ENCODE measurements at regions of chr5 and their contacts with region 1.

Region 1: DNA sequence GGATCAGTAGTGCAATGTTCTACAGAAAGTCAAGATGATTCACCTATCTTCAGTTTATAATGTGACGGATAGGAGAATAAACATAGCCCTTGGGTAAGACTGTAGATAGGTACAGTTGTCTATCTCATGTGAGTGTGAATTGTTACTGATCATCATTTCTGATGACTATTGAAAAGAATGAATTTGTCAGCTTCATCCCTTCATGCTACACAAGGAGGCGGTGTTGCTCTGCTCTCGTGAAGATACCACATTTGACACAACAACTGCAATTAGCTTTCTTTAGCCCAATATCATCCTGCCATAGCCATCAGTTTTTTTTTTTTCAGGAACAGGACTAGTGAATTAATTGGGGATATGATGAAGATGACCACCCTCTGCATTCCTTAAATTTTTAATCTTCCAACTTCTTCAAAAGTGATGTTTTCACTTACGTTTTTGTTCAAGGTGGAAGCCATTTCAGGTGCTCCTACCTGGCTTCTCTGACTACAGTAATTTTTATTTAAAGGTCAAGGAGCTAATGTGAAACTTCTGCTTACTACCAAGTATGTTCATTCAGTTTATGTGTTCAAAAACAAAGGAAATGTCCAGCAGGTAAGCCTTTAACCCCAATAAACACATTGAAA is 152.9 kb upstream of the MOCS2 start:
- DNase-seq: peak; percentile 65
- H3K4me3 Mint-ChIP-seq: no peak overlapping the region
- H3K27ac Mint-ChIP-seq: no peak overlapping the region
- H3K4me1 Mint-ChIP-seq: peaks cover 21% of the 10 kb centered on the region
- H3K27me3 Mint-ChIP-seq: no peaks in the 10 kb centered on the region
- CTCF ChIP-seq: peak; percentile 61

Region 2: DNA sequence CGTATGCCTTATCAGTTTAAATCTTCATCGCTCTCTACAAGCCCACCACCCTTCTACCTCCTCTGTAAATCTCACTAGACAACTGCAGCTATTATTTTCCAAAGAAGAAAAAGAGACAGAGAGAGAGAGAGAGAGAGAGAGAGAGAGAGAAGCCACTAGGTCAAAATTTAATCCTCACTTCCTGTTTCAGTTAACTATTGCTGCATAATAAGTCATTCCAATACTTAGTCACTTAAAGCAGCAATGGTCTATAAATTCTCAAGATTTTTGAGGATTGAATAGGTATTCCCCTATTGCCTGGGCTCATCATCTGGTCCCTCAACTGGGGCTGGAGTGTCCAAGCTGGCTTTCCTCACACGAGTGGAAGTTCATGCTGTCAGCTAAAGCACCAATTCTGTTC is 405.9 kb before region 1 on chr5:
- CTCF ChIA-PET with region 1: no interaction called
- POLR2A ChIA-PET with region 1: no interaction called
- intact Hi-C with region 1: no loop called
- DNase-seq: no peak
- H3K4me3 Mint-ChIP-seq: no peak overlapping the region
- H3K27ac Mint-ChIP-seq: no peak overlapping the region
- H3K4me1 Mint-ChIP-seq: peaks cover 6% of the 10 kb centered on the region
- H3K27me3 Mint-ChIP-seq: no peaks in the 10 kb centered on the region
- CTCF ChIP-seq: no peak

Region 3: GRCh38 chr5:53069626-53070025 is 192.8 kb before region 1 on chr5:
- CTCF ChIA-PET with region 1: no interaction called
- POLR2A ChIA-PET with region 1: no interaction called
- intact Hi-C with region 1: no loop called
- DNase-seq: peak; percentile 71
- H3K4me3 Mint-ChIP-seq: no peak overlapping the region
- H3K27ac Mint-ChIP-seq: no peak overlapping the region
- H3K4me1 Mint-ChIP-seq: peaks cover 7% of the 10 kb centered on the region
- H3K27me3 Mint-ChIP-seq: no peaks in the 10 kb centered on the region
- CTCF ChIP-seq: no peak

Region 4: GRCh38 chr5:53170748-53171349 is 91.6 kb before region 1 on chr5:
- CTCF ChIA-PET with region 1: interaction called, 5 read pairs
- POLR2A ChIA-PET with region 1: no interaction called
- intact Hi-C with region 1: loop called (anchors 2 kb)
- DNase-seq: peak; percentile 63
- H3K4me3 Mint-ChIP-seq: no peak overlapping the region
- H3K27ac Mint-ChIP-seq: no peak overlapping the region
- H3K4me1 Mint-ChIP-seq: peaks cover 5% of the 10 kb centered on the region
- H3K27me3 Mint-ChIP-seq: no peaks in the 10 kb centered on the region
- CTCF ChIP-seq: peak; percentile 77

Region 5: DNA sequence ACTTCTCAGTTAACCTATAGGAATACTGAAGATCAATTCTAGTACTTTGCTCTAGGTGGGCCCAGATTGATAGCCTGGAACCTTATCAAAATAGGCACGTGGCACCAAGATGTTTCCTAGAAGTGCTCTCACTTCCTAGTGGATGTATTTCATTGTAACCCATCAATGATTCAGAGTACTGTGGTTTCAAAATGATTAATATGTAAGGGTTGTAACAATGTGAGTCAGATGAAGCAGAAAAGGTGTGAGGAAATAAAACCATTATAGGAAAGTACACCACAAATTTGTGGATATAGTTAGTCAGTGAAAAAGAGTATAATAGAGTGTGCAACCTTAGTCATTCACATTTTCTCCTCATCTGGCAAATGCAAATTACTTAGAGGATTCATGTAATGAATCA is 40.6 kb after region 1 on chr5:
- CTCF ChIA-PET with region 1: no interaction called
- POLR2A ChIA-PET with region 1: no interaction called
- intact Hi-C with region 1: loop called (anchors 5 kb)
- DNase-seq: peak; percentile 80
- H3K4me3 Mint-ChIP-seq: no peak overlapping the region
- H3K27ac Mint-ChIP-seq: no peak overlapping the region
- H3K4me1 Mint-ChIP-seq: peaks cover 17% of the 10 kb centered on the region
- H3K27me3 Mint-ChIP-seq: no peaks in the 10 kb centered on the region
- CTCF ChIP-seq: no peak

Region 6: DNA sequence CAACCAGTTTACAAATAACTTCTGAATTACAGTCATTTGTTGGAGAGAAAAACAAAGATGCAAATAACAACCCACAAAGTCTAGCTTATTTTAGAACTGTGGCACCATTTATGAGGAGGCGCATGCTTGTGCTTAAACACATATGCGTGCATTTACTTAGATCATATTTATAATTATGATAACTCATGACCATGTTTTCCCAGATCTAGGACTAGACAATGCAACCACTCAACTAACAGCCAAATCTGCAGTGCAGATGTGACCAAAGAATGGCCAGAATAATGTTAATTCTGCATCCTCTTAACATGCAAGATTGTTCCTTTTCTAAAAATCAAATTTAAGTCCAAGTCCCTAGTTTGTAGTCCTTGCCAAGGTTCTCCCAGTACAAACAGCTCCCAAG is 50.7 kb after region 1 on chr5:
- CTCF ChIA-PET with region 1: no interaction called
- POLR2A ChIA-PET with region 1: no interaction called
- intact Hi-C with region 1: no loop called
- DNase-seq: no peak
- H3K4me3 Mint-ChIP-seq: no peak overlapping the region
- H3K27ac Mint-ChIP-seq: no peak overlapping the region
- H3K4me1 Mint-ChIP-seq: peaks cover under 1% of the 10 kb centered on the region
- H3K27me3 Mint-ChIP-seq: no peaks in the 10 kb centered on the region
- CTCF ChIP-seq: no peak

Region 7: DNA sequence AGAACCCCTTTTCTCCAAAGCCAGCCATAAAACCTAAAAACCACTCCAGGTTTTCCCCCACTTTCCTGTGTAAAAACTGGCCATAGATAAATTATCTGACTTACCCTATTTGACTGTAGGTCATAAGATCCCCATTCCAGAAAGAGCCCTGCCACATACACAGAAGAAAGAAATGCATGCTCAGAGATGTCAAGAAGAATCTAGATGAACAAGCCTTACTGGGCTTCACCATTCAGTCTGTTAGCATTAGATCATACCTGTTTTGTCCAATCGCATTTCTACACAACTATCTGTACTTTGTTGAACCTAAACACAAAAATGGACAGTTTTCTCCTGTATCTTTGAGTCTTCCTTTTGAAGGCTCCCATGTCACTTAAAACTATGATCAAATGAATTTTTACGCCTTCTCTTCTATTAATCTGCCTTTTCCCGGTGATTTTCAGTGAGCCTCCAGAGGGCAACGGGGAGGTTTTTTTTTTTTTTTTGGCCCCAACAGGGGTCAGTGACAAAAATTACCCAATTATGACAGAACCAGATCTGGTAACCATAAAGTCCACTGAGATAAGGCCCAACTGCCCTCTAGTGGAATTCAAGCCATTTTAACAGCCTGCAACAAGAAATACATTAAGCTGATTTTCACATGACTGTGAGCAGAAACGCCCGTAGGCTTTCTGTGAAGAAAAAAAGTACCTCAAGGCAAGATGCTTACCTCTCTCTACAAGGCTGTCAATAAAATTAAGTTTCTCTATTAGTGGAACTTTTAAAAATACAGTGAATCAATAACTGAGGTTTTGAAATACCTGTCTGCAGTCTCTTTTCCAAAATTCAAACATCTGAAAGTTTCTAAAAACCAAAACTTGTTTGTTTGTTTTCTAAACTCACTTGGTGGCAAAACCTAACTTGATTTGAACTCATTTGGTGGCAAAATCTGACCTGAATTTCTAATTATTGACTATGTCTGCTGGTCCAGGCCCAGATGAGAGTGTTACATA is 168.1 kb after region 1 on chr5:
- CTCF ChIA-PET with region 1: interaction called, 29 read pairs
- POLR2A ChIA-PET with region 1: interaction called, 3 read pairs
- intact Hi-C with region 1: loop called (anchors 1 kb)
- DNase-seq: peak; percentile 69
- H3K4me3 Mint-ChIP-seq: no peak overlapping the region
- H3K27ac Mint-ChIP-seq: no peak overlapping the region
- H3K4me1 Mint-ChIP-seq: no peaks in the 10 kb centered on the region
- H3K27me3 Mint-ChIP-seq: no peaks in the 10 kb centered on the region
- CTCF ChIP-seq: peak; percentile 58

Region 8: DNA sequence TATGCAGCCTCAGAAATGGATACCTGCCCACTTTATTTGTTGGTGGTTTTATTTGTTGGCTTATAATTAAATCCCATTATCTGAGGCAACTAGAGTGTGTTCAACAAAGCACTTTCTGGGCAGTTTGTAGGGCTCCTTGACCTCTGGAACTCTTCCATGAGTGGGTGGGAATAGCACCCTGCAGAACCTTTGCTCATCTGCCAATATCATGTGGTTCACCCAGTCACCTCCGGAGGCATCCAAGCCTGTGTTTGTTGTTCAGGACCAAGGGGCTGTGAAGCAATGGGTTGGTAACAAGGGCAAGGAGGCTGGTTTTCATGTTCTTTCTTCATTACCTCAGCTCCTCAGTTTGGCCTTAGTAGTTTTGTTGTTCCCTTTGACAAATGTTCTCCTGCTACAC is 612.0 kb after region 1 on chr5:
- CTCF ChIA-PET with region 1: interaction called, 4 read pairs
- POLR2A ChIA-PET with region 1: no interaction called
- intact Hi-C with region 1: loop called (anchors 2 kb)
- DNase-seq: peak; percentile 43
- H3K4me3 Mint-ChIP-seq: no peak overlapping the region
- H3K27ac Mint-ChIP-seq: no peak overlapping the region
- H3K4me1 Mint-ChIP-seq: no peaks in the 10 kb centered on the region
- H3K27me3 Mint-ChIP-seq: no peaks in the 10 kb centered on the region
- CTCF ChIP-seq: no peak

Region 9: GRCh38 chr5:54229041-54229780 is 966.8 kb after region 1 on chr5:
- CTCF ChIA-PET with region 1: interaction called, 18 read pairs
- POLR2A ChIA-PET with region 1: no interaction called
- intact Hi-C with region 1: no loop called
- DNase-seq: peak; percentile 67
- H3K4me3 Mint-ChIP-seq: no peak overlapping the region
- H3K27ac Mint-ChIP-seq: no peak overlapping the region
- H3K4me1 Mint-ChIP-seq: peaks cover 6% of the 10 kb centered on the region
- H3K27me3 Mint-ChIP-seq: no peaks in the 10 kb centered on the region
- CTCF ChIP-seq: peak; percentile 74

Measured in MCF 10A (cell line).